Left colon (tissue), 2 donors: ENCODE measurements at regions of chr4 and their contacts with region 1.

Region 1: DNA sequence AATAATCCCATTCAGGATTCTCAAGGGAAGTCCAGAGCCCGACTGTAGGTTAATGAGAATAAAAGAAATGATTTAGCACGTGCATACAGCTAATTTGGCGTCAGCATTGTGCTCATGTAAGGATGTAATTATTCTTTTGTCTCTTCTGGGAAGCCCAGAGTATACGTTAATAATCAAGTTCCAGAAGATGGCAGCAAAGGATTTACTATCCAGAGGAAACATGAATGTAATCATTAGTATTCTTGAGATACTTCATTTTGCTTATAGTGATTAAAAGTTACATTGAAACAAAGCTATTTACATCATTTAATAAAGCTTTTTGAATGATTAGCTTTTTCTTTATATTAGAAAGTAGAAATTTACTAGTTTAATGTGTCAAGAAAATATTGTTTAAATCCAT is 27.1 kb upstream of the MAP9 start:
- DNase-seq: no peak
- ATAC-seq: no peak

Region 2: GRCh38 chr4:155953151-155954114 is 549.5 kb after region 1 on chr4 and contains the start of gene CTSO:
- intact Hi-C with region 1: loop called in 1 of 2 experiments (anchors 10 kb)
- DNase-seq: peak; percentile 65 to 82
- ATAC-seq: peak; percentile 82
- total RNA-seq, gene CTSO: 11.4 to 16.7 TPM

Region 3: GRCh38 chr4:156312261-156312847 is 908.5 kb after region 1 on chr4:
- intact Hi-C with region 1: no loop called
- DNase-seq: no peak
- ATAC-seq: no peak